ENCODE measurements at regions of chr7 and their contacts with region 1.

Region 1: GRCh38 chr7:37408291-37409228 is 40.1 kb downstream of the ELMO1 start:
- DNase-seq: no peak
- ATAC-seq: peak; percentile 74
- H3K4me3 Mint-ChIP-seq: peak overlapping the region; percentile 88
- H3K27ac Mint-ChIP-seq: peak overlapping the region; percentile 93
- H3K4me1 Mint-ChIP-seq: peaks cover 33% of the 10 kb centered on the region
- H3K27me3 Mint-ChIP-seq: no peaks in the 10 kb centered on the region

Region 2: DNA sequence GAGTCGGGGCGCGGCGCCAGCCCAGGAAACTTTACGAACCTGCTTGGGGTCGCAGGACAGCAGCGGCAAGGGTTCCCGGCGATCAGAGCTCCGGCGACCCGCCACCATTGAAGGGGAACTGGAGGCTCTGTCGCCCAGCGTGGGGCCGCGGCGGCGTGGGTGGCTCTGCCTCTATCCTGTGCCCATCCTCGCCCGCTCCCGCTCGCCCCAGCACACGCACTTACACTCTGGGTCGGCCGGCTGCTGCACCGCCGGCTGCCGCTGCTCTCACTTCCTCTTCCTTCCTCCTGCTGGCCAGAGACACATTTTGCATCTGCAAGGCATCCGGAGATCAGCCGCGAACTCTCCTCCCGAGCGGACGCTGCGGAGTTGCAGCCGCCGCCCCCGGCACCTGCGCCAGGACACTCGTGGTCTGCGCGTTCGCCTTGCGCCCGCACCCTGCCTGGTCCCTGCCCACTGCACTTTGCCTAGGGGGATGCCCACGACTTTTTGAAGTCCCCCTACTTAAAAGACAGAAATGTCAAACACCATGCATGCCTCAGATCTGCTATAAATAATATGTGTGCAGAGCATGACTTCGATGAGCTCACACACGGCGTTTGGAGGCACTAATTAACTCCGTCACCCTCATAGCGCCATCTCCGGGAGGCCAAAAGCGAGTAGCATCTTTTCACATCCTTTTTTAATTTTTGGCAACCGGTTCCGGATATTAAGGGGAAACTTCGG is 40.2 kb after region 1 on chr7 and contains the start of gene ELMO1:
- POLR2A ChIA-PET with region 1: interaction called, 15 read pairs
- DNase-seq: peak; percentile 81
- ATAC-seq: peak; percentile 90
- H3K4me3 Mint-ChIP-seq: peak within 1 kb of the TSS; percentile 91
- H3K27ac Mint-ChIP-seq: peak within 1 kb of the TSS; percentile 93
- H3K4me1 Mint-ChIP-seq: peaks cover 26% of the 10 kb centered on the region
- H3K27me3 Mint-ChIP-seq: no peaks in the 10 kb centered on the region
- total RNA-seq, gene ELMO1: 73.4 to 78.6 TPM

Region 3: GRCh38 chr7:37674531-37674930 is 266.0 kb after region 1 on chr7:
- POLR2A ChIA-PET with region 1: no interaction called
- DNase-seq: no peak
- ATAC-seq: no peak
- H3K4me3 Mint-ChIP-seq: no peak overlapping the region
- H3K27ac Mint-ChIP-seq: no peak overlapping the region
- H3K4me1 Mint-ChIP-seq: no peaks in the 10 kb centered on the region
- H3K27me3 Mint-ChIP-seq: peaks cover 36% of the 10 kb centered on the region

Region 4: GRCh38 chr7:37759526-37759925 is 351.0 kb after region 1 on chr7:
- POLR2A ChIA-PET with region 1: no interaction called
- DNase-seq: no peak
- ATAC-seq: no peak
- H3K4me3 Mint-ChIP-seq: no peak overlapping the region
- H3K27ac Mint-ChIP-seq: no peak overlapping the region
- H3K4me1 Mint-ChIP-seq: peaks cover 5% of the 10 kb centered on the region
- H3K27me3 Mint-ChIP-seq: peaks cover 19% of the 10 kb centered on the region

Measured in activated naive CD8-positive, alpha-beta T cell treated with anti-CD3 and anti-CD28 coated beads, Interleukin-2, amount 10 ng/mL, durations not matched to agents 7 days and 5 days (primary cell).